SK-N-SH (cell line): ENCODE measurements at regions of chr7 and their contacts with region 1.

Region 1: DNA sequence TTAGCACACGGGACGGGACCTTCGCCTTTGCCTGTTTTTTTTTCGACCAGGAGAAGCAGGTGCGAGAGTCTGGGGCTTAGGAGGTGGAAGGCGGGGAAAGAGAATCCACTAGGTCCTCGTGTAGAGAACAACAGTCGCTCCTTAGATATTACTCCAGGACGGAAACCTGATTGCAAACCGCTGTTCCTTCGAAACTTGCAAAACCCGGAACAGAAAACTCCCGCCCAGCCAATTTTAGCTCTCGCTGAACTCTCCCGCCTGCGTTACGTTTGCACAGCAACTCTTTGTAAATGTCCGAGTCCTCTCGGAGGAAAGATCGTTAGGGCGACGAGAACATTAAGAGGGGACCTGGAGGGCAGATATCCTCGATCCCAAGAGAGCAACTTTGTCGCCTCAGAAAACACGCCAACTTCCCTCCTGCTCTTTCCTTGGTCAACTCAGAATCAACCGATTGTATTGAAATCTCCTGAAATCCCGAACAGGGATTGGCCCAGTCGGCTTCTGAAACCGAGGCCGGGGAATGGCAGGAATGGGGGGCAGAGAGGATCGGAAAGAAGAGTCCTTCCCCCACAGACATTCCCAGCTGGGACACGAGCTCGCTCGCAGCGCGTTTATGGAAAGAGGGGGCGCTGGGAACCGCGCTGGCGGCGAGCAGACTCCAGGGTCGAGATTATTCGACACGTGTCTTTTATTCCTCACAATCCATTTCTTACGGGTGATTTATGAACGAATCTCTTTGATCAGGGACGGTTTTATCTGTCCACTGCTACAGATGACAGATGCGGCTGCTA is 9.9 kb downstream of the TWIST1 start:
- DNase-seq: peak; percentile 77
- H3K4me3 ChIP-seq: peak overlapping the region; percentile 92 to 100
- H3K27ac ChIP-seq: peak overlapping the region; percentile 96 to 100
- H3K4me1 ChIP-seq: peaks cover 21 to 79% of the 10 kb centered on the region in 2 experiments; a peak in 3 of 4 replicates
- H3K27me3 ChIP-seq: no peaks in the 10 kb centered on the region
- CTCF ChIP-seq: no peak
- EP300 ChIP-seq: peak in 1 of 2 experiments; percentile 97; a peak in 3 of 4 replicates
- RAD21 ChIP-seq: no peak; the same call in 1 of the 2 replicates

Region 2: DNA sequence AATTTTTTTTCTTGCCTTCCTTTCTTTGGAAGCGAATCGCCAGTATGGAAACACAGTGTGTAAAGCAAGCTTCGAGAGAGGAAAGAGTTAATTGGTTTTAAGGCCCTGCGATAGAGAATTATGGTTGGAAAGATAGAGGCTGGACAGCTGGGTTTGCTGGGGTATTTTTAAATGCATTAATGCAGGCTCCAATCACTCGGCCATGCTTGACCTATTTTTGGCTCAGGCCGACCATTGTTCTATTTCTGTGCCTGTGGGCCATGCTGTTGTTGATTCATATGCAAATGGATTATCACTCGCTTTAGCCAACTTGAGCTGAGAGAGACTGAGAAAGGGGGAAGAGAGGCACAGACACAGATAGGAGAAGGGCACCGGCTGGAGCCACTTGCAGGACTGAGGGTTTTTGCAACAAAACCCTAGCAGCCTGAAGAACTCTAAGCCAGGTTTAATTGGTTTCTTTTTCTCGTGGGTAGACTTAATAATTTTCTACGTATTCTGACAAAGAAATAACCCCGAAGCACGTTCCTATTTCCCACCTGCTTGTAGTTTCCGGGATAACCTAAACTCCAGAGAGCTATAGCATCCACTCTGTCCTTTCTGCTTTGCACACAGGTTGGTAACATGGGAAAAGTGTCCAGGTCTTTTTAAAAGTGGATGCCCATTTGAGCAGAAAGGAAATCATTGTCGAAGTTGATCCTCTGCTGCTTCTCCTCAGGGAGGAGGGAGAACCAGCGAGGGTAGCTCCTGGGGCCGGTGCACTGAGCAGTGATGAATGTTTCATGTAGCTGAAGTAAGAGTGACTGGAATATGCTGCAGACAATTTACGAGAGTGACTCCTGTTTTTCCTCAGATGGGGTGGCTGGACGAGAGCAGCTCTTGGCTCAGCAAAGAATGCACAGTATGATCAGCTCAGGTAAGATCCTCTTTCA is 611.9 kb before region 1 on chr7 and contains the start of gene HDAC9:
- CTCF ChIA-PET with region 1: no interaction called
- POLR2A ChIA-PET with region 1: interaction called, 13 read pairs
- DNase-seq: peak; percentile 49
- H3K4me3 ChIP-seq: peak within 1 kb of the TSS; percentile 63 to 67
- H3K27ac ChIP-seq: peak within 1 kb of the TSS; percentile 80 to 100
- H3K4me1 ChIP-seq: peaks cover 8 to 53% of the 10 kb centered on the region in 2 experiments; a peak in 3 of 4 replicates
- H3K27me3 ChIP-seq: no peaks in the 10 kb centered on the region
- CTCF ChIP-seq: no peak
- EP300 ChIP-seq: peak; percentile 62 to 93; a peak in 2 of 4 replicates
- RAD21 ChIP-seq: peak; percentile 43
- polyA plus RNA-seq, gene HDAC9: 11.6 and 19.8 TPM in 2 replicates

Region 3: GRCh38 chr7:18803923-18804322 is 303.6 kb before region 1 on chr7:
- CTCF ChIA-PET with region 1: interaction called, 4 read pairs
- POLR2A ChIA-PET with region 1: interaction called, 30 read pairs
- DNase-seq: peak; percentile 48
- H3K4me3 ChIP-seq: no peak overlapping the region
- H3K27ac ChIP-seq: peak overlapping the region in 1 of 2 experiments; percentile 96; a peak in 2 of 4 replicates
- H3K4me1 ChIP-seq: peaks cover 0 to 32% of the 10 kb centered on the region in 2 experiments; a peak in 2 of 4 replicates
- H3K27me3 ChIP-seq: no peaks in the 10 kb centered on the region
- CTCF ChIP-seq: no peak
- EP300 ChIP-seq: peak; percentile 23 to 99; a peak in 2 of 4 replicates
- RAD21 ChIP-seq: peak; percentile 54

Region 4: GRCh38 chr7:18890134-18890533 is 217.4 kb before region 1 on chr7:
- CTCF ChIA-PET with region 1: interaction called, 5 read pairs
- POLR2A ChIA-PET with region 1: interaction called, 52 read pairs
- DNase-seq: peak; percentile 52
- H3K4me3 ChIP-seq: no peak overlapping the region
- H3K27ac ChIP-seq: peak overlapping the region; percentile 54 to 100
- H3K4me1 ChIP-seq: peaks cover 17 to 57% of the 10 kb centered on the region in 2 experiments; a peak in 3 of 4 replicates
- H3K27me3 ChIP-seq: no peaks in the 10 kb centered on the region
- CTCF ChIP-seq: no peak
- EP300 ChIP-seq: peak; percentile 96 to 100
- RAD21 ChIP-seq: peak; percentile 52

Region 5: DNA sequence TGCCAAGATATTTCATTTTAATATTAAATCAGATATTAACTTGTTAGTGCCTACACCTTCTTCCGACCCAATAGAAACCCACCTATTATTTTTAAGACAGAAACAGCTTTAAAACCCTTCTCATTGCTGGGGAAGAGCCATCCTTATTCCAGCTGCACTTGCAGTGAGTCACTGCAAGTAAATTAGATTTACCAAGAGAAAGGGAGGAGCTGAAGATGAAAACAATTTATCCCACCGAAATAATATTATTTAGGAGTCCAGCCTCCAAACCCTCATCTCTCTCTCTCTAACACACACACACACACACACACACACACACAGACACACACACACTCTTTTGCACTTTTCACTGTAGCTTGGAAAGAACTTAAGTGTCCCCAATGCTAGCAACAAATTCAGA is 17.0 kb before region 1 on chr7:
- CTCF ChIA-PET with region 1: interaction called, 36 read pairs
- POLR2A ChIA-PET with region 1: interaction called, 16 read pairs
- DNase-seq: no peak
- H3K4me3 ChIP-seq: no peak overlapping the region
- H3K27ac ChIP-seq: peak overlapping the region; percentile 70 to 100
- H3K4me1 ChIP-seq: peaks cover 36 to 55% of the 10 kb centered on the region in 2 experiments
- H3K27me3 ChIP-seq: no peaks in the 10 kb centered on the region
- CTCF ChIP-seq: no peak
- EP300 ChIP-seq: peak in 1 of 2 experiments; percentile 43; a peak in 1 of 4 replicates
- RAD21 ChIP-seq: no peak